ENCODE measurements at regions of chrX and their contacts with region 1.

Region 1: DNA sequence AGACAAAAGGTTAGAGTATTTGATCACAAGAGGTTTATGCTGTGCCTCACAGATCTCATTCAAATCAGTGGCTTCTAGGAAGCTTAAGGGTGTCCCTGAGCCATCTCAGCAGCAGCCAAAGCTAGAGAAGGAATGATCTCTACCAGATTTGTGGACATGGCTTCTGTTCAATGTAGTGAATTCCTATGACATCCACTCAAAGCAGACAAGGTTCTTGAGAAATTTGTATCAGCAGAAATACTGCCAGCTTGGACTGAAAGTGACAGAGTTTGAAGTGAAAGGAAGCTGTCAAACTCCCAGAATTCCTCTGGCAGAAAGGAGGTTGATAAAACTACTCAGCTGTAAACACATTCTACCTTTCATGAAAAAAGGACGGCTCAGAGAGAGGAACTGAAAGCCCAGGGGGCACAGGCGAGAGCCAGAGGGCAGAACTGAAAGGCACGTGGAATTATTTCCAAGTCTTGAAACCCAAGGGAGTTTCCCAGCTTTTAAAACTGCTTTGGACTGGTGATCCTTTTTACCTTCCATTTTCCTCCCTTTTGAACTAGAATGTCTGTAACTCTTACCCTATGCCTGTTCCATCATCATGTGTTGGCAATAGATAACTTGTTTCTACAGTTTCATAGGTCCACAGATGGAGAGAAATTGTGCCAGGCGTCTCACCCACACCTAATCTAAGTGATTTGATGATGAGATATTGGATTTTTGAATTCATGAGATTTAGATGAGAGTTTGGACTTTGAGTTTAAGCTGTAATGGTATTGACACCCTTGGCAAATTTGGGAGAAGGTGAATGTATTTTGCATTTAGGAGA is 14.5 kb upstream of the MED14 start:
- DNase-seq: no peak
- H3K4me3 ChIP-seq: no peak overlapping the region
- CTCF ChIP-seq: no peak

Region 2: DNA sequence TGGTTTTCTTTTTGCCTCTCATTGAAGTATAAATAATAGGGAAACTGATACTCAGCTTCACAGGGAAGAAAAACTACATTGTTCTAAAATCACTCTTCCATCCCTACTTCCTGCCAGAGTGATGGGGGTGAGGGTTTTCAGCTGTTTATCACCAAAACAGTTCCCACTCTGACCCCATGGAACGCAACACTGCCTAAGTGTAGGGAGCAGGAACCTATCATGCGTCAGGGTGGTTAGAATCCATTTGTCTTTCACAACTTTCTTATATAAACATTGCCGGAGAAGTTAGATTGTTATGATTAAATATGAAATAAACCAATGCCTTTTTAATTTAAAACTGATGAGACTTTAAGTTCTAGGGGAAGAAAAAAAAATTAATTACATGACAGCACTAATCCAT is 142.5 kb before region 1 on chrX:
- in situ Hi-C with region 1: no loop called
- DNase-seq: no peak
- H3K4me3 ChIP-seq: no peak overlapping the region
- CTCF ChIP-seq: no peak

Region 3: GRCh38 chrX:40784516-40785151 is 34.7 kb after region 1 on chrX:
- in situ Hi-C with region 1: loop called (anchors 5 kb)
- DNase-seq: no peak
- H3K4me3 ChIP-seq: no peak overlapping the region
- CTCF ChIP-seq: no peak